IMR-90 (cell line): ENCODE measurements at regions of chr7 and their contacts with region 1.

Region 1: GRCh38 chr7:98394377-98394836 is 6.5 kb downstream of the BAIAP2L1 start:
- DNase-seq: peak; percentile 90
- ATAC-seq: peak; percentile 90
- H3K4me3 ChIP-seq: no peak overlapping the region
- H3K27ac ChIP-seq: peak overlapping the region; percentile 55; the same call in 1 of the 2 replicates
- H3K4me1 ChIP-seq: peaks cover 5% of the 10 kb centered on the region
- H3K27me3 ChIP-seq: no peaks in the 10 kb centered on the region
- CTCF ChIP-seq: no peak
- POLR2A ChIP-seq: no peak
- RAD21 ChIP-seq: no peak

Region 2: GRCh38 chr7:98372993-98373392 is 21.4 kb before region 1 on chr7:
- CTCF ChIA-PET with region 1: interaction called, 5 read pairs
- POLR2A ChIA-PET with region 1: no interaction called
- dilution Hi-C with region 1: no loop called
- in situ Hi-C with region 1: no loop called
- intact Hi-C with region 1: loop called (anchors 1 kb)
- DNase-seq: peak; percentile 81
- ATAC-seq: no peak
- H3K4me3 ChIP-seq: no peak overlapping the region
- H3K27ac ChIP-seq: no peak overlapping the region
- H3K4me1 ChIP-seq: peaks cover 2% of the 10 kb centered on the region; the same call in 1 of the 2 replicates
- H3K27me3 ChIP-seq: no peaks in the 10 kb centered on the region
- CTCF ChIP-seq: no peak
- POLR2A ChIP-seq: no peak
- RAD21 ChIP-seq: no peak

Region 3: GRCh38 chr7:98575878-98576277 is 181.5 kb after region 1 on chr7:
- CTCF ChIA-PET with region 1: no interaction called
- POLR2A ChIA-PET with region 1: no interaction called
- dilution Hi-C with region 1: no loop called
- in situ Hi-C with region 1: no loop called
- intact Hi-C with region 1: no loop called
- DNase-seq: no peak
- ATAC-seq: no peak
- H3K4me3 ChIP-seq: no peak overlapping the region
- H3K27ac ChIP-seq: no peak overlapping the region
- H3K4me1 ChIP-seq: no peaks in the 10 kb centered on the region
- H3K27me3 ChIP-seq: no peaks in the 10 kb centered on the region
- CTCF ChIP-seq: no peak
- POLR2A ChIP-seq: no peak
- RAD21 ChIP-seq: no peak

Region 4: GRCh38 chr7:99040104-99040958 is 645.9 kb after region 1 on chr7:
- CTCF ChIA-PET with region 1: no interaction called
- POLR2A ChIA-PET with region 1: no interaction called
- dilution Hi-C with region 1: no loop called
- in situ Hi-C with region 1: no loop called
- intact Hi-C with region 1: no loop called
- DNase-seq: peak; percentile 86
- ATAC-seq: peak; percentile 81
- H3K4me3 ChIP-seq: no peak overlapping the region
- H3K27ac ChIP-seq: peak overlapping the region; percentile 49
- H3K4me1 ChIP-seq: peaks cover 6% of the 10 kb centered on the region
- H3K27me3 ChIP-seq: no peaks in the 10 kb centered on the region
- CTCF ChIP-seq: peak; percentile 82
- POLR2A ChIP-seq: no peak
- RAD21 ChIP-seq: peak; percentile 88